ENCODE measurements at regions of chr13 and their contacts with region 1.

Region 1: DNA sequence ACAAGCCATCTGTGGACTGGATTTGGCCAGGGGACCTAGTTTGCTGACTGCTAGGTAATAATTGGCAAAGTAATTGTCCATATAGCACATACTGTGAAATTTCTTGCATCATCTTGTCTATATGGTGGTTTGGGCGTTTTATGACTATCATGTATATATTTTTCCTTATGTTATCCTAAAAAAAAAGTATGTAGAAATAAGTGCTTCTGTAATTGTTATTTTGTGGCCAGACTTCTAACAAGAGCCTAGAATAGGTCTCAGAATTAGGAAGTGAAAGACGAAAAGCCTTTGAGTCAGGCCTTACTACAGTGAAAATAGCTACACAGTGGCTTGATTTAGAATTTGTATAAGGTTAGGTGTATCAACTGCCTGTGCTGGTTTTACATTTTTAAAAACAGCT is 4.2 kb downstream of the FNDC3A start:
- DNase-seq: no peak
- ATAC-seq: no peak

Region 2: GRCh38 chr13:48908381-48909055 is 71.4 kb before region 1 on chr13:
- intact Hi-C with region 1: no loop called
- DNase-seq: no peak
- ATAC-seq: no peak

Region 3: DNA sequence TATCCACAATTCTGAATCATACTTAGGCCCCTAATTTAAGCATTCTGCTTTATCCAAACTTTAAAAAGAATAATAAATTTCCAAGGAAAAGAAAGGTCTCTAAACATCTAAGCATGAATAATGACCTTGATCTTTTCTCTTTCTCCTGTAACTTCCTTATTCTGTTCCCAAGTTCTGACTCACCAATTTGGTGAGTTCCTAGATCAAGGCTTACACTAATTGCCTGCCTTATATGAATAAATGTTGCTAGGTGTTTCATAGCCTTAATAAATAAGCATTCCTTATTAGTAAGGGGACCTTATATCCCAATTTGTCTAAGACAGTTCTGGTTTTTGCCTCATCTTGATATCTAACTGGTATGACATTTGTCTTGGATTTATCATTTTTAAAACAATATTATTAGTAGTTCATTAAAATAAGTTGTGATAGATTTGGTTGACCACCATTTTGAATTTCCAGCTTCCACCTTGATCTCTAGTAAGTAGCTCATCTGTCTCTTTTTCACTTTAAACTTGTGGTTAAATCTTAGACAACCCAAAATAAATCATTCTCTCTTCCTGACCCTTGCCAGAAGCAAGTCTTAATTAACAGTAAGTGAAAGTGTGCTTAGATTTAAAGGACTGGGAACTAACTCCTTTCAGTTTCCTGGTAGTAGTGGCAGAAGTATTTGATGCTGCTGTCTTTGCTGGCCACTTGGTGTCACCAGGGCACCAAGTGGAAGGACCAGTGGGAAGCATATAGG is 119.0 kb after region 1 on chr13:
- intact Hi-C with region 1: loop called in 1 of 2 experiments (anchors 10 kb)
- DNase-seq: no peak
- ATAC-seq: peak; percentile 86

Region 4: GRCh38 chr13:49759503-49759902 is 779.6 kb after region 1 on chr13:
- intact Hi-C with region 1: no loop called
- DNase-seq: no peak
- ATAC-seq: no peak